ENCODE measurements at regions of chr22 and their contacts with region 1.

Region 1: GRCh38 chr22:45240810-45241631 is at the start of gene KIAA0930:
- DNase-seq: peak; percentile 82
- ATAC-seq: peak; percentile 72
- H3K4me3 ChIP-seq: peak within 1 kb of the TSS; percentile 35 to 69 (median 65)
- H3K4me3 Mint-ChIP-seq: peak within 1 kb of the TSS; percentile 93
- H3K27ac ChIP-seq: peak within 1 kb of the TSS; percentile 19 to 56
- H3K27ac Mint-ChIP-seq: peak within 1 kb of the TSS; percentile 92
- H3K4me1 ChIP-seq: peaks cover 33 to 53% of the 10 kb centered on the region in 2 donors
- H3K4me1 Mint-ChIP-seq: peaks cover 63% of the 10 kb centered on the region
- H3K27me3 ChIP-seq: no peaks in the 10 kb centered on the region
- H3K27me3 Mint-ChIP-seq: no peaks in the 10 kb centered on the region
- CTCF ChIP-seq: no peak
- total RNA-seq, gene KIAA0930: 46.8 and 47.2 TPM in 2 replicates

Region 2: DNA sequence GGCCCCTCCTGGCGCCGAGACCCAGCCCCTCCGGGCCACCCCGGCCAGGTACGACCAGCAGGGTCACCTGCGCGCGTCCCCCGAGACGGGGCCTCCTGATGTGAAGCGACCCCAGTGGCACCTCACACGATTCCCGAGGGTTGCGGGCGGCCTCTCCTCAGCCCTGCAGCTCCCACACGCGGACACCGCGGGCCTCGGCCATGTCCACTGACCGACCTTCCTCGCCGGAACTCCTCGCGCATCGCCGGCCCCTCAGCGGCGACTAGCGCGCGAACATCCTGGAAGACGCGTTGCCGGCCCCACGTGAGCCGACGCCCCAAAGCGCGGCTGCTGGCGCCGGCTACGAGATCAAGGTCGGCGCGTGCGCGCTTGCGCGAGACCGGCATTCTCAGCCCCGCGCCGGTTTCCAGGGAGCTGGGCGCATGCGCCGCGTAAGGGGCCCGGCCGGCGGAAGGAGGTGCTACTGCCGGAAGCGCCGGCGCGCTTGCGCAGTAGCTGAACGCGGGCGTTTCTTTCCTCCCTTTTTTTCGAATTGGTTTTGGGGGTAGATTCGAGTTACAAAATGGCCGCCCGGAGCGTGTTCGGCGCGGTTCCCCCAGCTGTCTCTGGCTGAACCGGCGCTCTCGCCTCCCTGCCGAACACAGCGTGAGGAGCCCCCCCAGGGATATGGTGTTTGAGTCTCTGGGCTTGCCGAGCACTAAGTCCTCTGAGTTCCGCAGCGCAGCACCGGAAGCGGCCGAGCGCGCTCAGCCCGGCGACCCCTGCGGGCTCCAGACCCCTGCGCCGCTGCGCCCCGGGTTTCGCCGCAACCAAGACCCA is 77.4 kb before region 1 on chr22 and contains the start of gene NUP50:
- CTCF ChIA-PET with region 1: interaction called, 6 read pairs
- POLR2A ChIA-PET with region 1: interaction called, 4 read pairs
- intact Hi-C with region 1: loop called (anchors 2 kb)
- DNase-seq: peak; percentile 99
- ATAC-seq: peak; percentile 79
- H3K4me3 ChIP-seq: peak within 1 kb of the TSS; percentile 76 to 89 (median 82)
- H3K4me3 Mint-ChIP-seq: peak within 1 kb of the TSS; percentile 92
- H3K27ac ChIP-seq: peak within 1 kb of the TSS; percentile 81 to 94
- H3K27ac Mint-ChIP-seq: peak within 1 kb of the TSS; percentile 94
- H3K4me1 ChIP-seq: peaks cover 19 to 23% of the 10 kb centered on the region in 2 donors
- H3K4me1 Mint-ChIP-seq: peaks cover 47% of the 10 kb centered on the region
- H3K27me3 ChIP-seq: no peaks in the 10 kb centered on the region
- H3K27me3 Mint-ChIP-seq: no peaks in the 10 kb centered on the region
- CTCF ChIP-seq: no peak
- total RNA-seq, gene NUP50: 105 and 108 TPM in 2 replicates

Region 3: GRCh38 chr22:45263463-45264269 is 22.6 kb after region 1 on chr22:
- CTCF ChIA-PET with region 1: interaction called, 15 read pairs
- POLR2A ChIA-PET with region 1: interaction called, 11 read pairs
- intact Hi-C with region 1: loop called (anchors 1 kb)
- DNase-seq: peak; percentile 92
- ATAC-seq: peak; percentile 97
- H3K4me3 ChIP-seq: peak overlapping the region in 2 of 5 experiments; percentile 16 to 56
- H3K4me3 Mint-ChIP-seq: peak overlapping the region; percentile 87
- H3K27ac ChIP-seq: no peak overlapping the region
- H3K27ac Mint-ChIP-seq: peak overlapping the region; percentile 78
- H3K4me1 ChIP-seq: peaks cover 39 to 47% of the 10 kb centered on the region in 2 donors
- H3K4me1 Mint-ChIP-seq: peaks cover 53% of the 10 kb centered on the region
- H3K27me3 ChIP-seq: peaks cover 0 to 3% (median under 1%) of the 10 kb centered on the region in 4 experiments
- H3K27me3 Mint-ChIP-seq: no peaks in the 10 kb centered on the region
- CTCF ChIP-seq: no peak

Region 4: DNA sequence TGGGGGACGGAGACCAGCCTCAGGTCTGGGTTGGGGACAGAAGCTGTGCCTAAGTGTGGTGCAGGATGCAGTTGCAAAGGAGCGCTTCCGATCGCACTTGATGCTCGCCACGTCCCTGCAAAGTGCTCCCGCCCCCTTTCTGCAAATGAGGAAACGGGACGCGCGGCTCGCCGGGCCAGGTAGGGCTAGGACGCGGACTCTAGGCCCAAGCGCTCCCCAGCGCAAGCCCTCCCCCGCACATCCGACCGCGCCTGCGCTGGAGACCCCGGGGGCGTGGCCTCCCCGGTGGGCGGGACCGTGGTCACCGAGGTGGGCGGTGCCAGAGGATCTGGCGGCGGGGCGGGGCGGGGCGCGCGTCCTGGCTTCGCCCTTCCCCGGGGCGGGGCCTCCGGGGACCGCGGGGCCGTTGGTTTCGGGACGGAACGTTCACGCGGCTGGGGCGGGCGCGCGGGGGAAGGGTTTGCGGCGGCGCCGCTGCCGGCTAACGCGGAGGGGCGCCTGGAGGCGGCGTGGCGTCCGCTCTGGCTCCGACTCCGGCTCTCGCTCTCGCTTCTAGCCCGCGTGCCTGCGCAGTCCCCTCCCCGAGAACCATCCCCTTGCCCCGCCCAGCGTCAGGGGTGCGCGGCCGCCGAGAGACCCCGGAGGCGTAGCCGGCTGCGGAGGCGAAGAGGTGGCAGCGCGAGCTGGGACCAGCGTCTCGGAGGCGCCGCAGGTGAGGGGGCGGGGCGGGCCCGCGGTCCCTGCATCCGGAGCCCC is 68.6 kb after region 1 on chr22 and contains the start of gene FAM118A:
- CTCF ChIA-PET with region 1: no interaction called
- POLR2A ChIA-PET with region 1: no interaction called
- intact Hi-C with region 1: loop called (anchors 1 kb)
- DNase-seq: peak; percentile 99
- ATAC-seq: peak; percentile 88
- H3K4me3 ChIP-seq: peak within 1 kb of the TSS; percentile 27 to 95 (median 80)
- H3K4me3 Mint-ChIP-seq: peak within 1 kb of the TSS; percentile 92
- H3K27ac ChIP-seq: peak within 1 kb of the TSS; percentile 73
- H3K27ac Mint-ChIP-seq: peak within 1 kb of the TSS; percentile 97
- H3K4me1 ChIP-seq: peaks cover 18 to 25% of the 10 kb centered on the region in 2 donors
- H3K4me1 Mint-ChIP-seq: peaks cover 36% of the 10 kb centered on the region
- H3K27me3 ChIP-seq: no peaks in the 10 kb centered on the region
- H3K27me3 Mint-ChIP-seq: no peaks in the 10 kb centered on the region
- CTCF ChIP-seq: no peak
- total RNA-seq, gene FAM118A: 66.5 and 74.6 TPM in 2 replicates

Region 5: GRCh38 chr22:45435544-45436139 is 194.6 kb after region 1 on chr22:
- CTCF ChIA-PET with region 1: no interaction called
- POLR2A ChIA-PET with region 1: no interaction called
- intact Hi-C with region 1: loop called (anchors 1 kb)
- DNase-seq: peak; percentile 87
- ATAC-seq: peak; percentile 95
- H3K4me3 ChIP-seq: no peak overlapping the region
- H3K4me3 Mint-ChIP-seq: no peak overlapping the region
- H3K27ac ChIP-seq: no peak overlapping the region
- H3K27ac Mint-ChIP-seq: peak overlapping the region; percentile 32
- H3K4me1 ChIP-seq: peaks cover 2 to 8% of the 10 kb centered on the region in 2 donors
- H3K4me1 Mint-ChIP-seq: peaks cover 16% of the 10 kb centered on the region
- H3K27me3 ChIP-seq: no peaks in the 10 kb centered on the region
- H3K27me3 Mint-ChIP-seq: peaks cover 4% of the 10 kb centered on the region
- CTCF ChIP-seq: peak; percentile 99